Activated B cell treated with CpG ODN at 0.5 μM for 24 hours (primary cell): ENCODE measurements at regions of chr3 and their contacts with region 1.

Region 1: GRCh38 chr3:181176601-181177000 is 187.1 kb upstream of the DNAJC19 start:
- DNase-seq: no peak
- ATAC-seq: no peak
- H3K4me3 Mint-ChIP-seq: no peak overlapping the region
- H3K27ac Mint-ChIP-seq: no peak overlapping the region
- H3K4me1 Mint-ChIP-seq: no peaks in the 10 kb centered on the region
- H3K27me3 Mint-ChIP-seq: no peaks in the 10 kb centered on the region
- CTCF ChIP-seq: no peak

Region 2: DNA sequence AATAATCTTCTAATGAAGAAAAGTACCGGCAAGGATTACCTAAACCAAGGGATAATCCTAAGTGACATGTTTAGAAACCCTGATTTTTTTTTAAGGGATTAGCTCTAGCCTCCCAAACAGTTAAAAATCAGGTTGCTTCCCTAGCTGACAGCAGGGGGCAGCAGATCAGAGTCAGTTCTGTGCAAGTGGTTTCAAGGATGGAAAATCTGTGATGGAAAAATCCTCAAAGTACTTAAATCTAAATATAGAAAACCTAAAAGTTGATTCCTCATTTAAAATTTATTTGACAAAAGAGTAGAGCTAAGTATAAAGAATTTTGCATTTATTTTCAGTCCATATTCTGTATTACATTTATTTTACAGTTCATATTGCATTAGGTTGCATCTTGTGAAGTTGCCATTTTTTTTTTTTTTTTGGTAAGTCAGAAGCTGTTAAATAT is 1247.5 kb before region 1 on chr3:
- CTCF ChIA-PET with region 1: no interaction called
- POLR2A ChIA-PET with region 1: no interaction called
- intact Hi-C with region 1: loop called (anchors 2 kb)
- DNase-seq: no peak
- ATAC-seq: no peak
- H3K4me3 Mint-ChIP-seq: no peak overlapping the region
- H3K27ac Mint-ChIP-seq: no peak overlapping the region
- H3K4me1 Mint-ChIP-seq: no peaks in the 10 kb centered on the region
- H3K27me3 Mint-ChIP-seq: peaks cover 10% of the 10 kb centered on the region
- CTCF ChIP-seq: no peak

Region 3: DNA sequence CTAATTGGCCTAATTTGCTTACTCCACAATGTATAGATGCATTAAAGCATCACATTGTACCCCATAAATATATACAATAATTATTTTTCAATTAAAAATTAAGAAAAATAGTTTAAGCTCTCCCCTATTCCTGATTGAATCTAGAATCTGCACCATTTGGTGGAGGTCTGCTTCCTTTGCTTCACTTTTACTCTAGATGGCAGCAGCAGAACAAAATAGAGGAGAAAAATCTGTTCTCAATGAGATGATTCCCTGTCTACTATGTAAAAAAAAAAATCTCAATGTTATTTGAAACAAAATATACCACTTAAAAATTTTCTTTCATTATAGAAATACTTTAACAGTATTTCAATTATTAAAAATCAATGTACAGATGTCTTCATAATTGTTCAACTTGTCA is 373.8 kb before region 1 on chr3:
- CTCF ChIA-PET with region 1: no interaction called
- POLR2A ChIA-PET with region 1: no interaction called
- intact Hi-C with region 1: loop called (anchors 2 kb)
- DNase-seq: no peak
- ATAC-seq: no peak
- H3K4me3 Mint-ChIP-seq: no peak overlapping the region
- H3K27ac Mint-ChIP-seq: no peak overlapping the region
- H3K4me1 Mint-ChIP-seq: no peaks in the 10 kb centered on the region
- H3K27me3 Mint-ChIP-seq: peaks cover 4% of the 10 kb centered on the region
- CTCF ChIP-seq: no peak

Region 4: GRCh38 chr3:181056136-181056732 is 120.4 kb before region 1 on chr3:
- CTCF ChIA-PET with region 1: no interaction called
- POLR2A ChIA-PET with region 1: no interaction called
- intact Hi-C with region 1: no loop called
- DNase-seq: no peak
- ATAC-seq: no peak
- H3K4me3 Mint-ChIP-seq: no peak overlapping the region
- H3K27ac Mint-ChIP-seq: no peak overlapping the region
- H3K4me1 Mint-ChIP-seq: no peaks in the 10 kb centered on the region
- H3K27me3 Mint-ChIP-seq: no peaks in the 10 kb centered on the region
- CTCF ChIP-seq: no peak